ENCODE measurements at regions of chr4 and their contacts with region 1.

Region 1: GRCh38 chr4:57102050-57102624 is 8.0 kb downstream of the IGFBP7 start:
- DNase-seq: no peak
- ATAC-seq: peak; percentile 83

Region 2: DNA sequence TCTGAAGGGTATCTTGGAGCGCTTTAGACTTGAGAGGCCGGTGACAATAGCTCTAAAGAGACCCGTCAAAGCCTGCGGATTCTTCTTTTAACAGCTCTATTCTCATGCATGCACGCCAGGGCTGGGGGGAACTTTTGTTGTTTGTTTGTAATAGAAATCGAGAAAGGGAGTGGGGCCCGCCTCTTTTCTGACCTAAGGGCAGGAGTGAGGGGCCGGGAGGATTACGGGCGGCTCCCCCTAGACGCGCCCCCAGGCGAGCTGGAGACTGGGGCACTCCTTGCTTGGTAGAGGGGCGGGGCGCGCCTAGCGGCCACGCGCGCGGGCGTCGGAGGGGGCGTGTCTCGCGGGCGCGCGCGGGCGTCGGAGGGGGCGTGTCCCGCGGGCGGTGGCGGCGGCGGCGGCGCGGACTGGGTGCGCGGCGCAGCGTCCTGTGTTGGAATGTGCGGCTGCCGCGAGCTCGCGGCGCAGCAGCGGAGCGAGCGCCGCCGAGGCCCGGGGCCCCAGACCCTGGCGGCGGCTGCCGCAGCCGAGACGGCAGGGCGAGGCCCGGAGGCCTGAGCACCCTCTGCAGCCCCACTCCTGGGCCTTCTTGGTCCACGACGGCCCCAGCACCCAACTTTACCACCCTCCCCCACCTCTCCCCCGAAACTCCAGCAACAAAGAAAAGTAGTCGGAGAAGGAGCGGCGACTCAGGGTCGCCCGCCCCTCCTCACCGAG is 194.5 kb before region 1 on chr4 and contains the start of gene REST:
- intact Hi-C with region 1: loop called (anchors 5 kb)
- DNase-seq: peak; percentile 91
- ATAC-seq: peak; percentile 83
- total RNA-seq, gene REST: 25.0 TPM

Region 3: GRCh38 chr4:56977321-56978012 is 124.7 kb before region 1 on chr4 and contains the start of gene NOA1:
- intact Hi-C with region 1: loop called (anchors 5 kb)
- DNase-seq: peak; percentile 98
- ATAC-seq: peak; percentile 90
- total RNA-seq, gene NOA1: 11.5 TPM

Region 4: DNA sequence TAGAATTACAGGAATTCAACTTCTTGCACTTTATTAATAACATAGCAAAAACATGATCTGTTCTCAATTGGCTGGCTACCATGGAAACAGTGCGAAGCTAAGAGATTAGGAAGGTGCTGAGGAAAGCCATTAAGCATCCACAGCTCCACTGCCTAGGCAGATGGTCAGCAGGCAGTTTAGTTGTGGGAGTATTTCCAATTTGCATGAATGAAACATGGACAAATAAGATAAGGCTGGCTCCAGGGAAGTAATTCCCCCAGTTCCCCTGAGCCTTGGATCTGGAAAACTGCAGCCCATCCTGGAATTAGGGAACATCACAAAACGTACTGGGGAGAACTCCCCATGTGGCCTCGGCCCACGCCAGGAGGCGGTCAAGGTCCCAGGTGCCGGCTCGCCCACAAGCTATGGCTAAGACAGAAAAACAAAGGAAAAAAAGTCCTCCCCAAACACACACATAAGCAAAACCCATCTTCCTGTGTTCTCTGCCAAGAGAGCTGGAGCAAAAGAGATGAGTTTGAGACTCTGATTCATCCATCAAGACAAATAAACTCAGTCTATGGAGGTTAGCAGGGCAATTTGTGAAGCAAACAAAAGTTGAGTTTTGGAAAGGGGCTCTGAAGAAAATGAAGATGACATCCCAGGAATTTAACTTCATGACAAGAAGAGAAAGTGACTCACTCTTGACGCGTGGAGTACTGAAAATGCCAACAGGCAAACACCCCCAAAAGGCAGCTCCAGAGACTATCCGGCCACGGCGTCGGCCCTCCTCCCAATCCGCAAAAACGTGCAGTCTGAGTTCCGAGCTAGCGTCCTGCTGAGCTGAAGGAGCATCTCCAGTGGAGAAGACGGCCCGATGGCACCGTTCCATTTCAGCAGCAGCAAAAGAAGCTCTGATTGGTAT is 37.1 kb before region 1 on chr4:
- intact Hi-C with region 1: loop called (anchors 5 kb)
- DNase-seq: peak; percentile 80
- ATAC-seq: peak; percentile 87

Measured in Right ventricle myocardium inferior (tissue), 1 donor.